Caco-2 (cell line): ENCODE measurements at regions of chr7 and their contacts with region 1.

Region 1: DNA sequence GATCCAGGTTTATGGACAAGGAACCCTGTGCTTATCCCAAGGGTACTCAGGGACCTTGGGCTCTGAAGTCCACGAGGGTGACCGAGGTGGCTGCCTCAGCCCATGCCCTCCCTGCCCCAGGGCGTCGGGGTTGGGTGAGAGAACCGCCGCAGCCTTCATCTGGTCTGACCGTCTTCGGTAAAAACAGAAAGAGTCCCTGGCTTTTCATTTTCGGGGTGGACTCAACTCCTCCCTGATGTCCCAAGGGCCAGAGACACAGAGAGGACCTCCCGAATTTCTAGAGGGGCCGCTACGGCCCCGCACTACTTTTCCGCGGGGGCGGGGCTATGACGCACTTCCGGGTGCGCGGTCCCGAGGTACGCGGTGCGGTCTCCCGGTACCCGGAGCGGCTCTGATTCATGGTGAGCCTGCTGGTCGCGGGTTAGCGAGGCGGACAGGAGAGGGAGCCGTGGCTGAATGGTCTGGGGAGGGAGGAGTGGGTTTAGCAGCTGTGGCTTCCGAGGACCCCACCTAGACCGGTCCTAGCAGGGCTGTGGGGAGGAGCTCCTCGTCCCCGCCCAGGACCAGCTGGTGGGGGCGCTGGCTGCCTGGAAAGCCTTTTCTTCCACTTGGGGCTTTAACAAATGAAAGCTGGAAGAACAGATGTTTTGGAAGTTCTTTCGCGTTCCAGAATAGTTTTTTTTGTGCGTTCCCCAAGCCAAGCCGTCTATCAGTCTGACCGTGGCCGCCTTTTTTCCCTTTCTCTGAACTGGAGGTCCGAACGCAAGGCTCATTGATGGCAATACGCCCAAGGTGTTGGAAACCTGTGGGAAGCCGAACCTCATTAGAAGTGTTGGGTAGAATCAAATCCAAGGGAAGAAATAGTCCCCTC is at the start of gene ZSCAN21:
- DNase-seq: peak; percentile 89 to 91
- H3K4me3 ChIP-seq: peak within 1 kb of the TSS; percentile 78
- H3K4me3 Mint-ChIP-seq: peak within 1 kb of the TSS; percentile 87
- H3K27ac Mint-ChIP-seq: peak within 1 kb of the TSS; percentile 96
- H3K4me1 ChIP-seq: peaks cover 5% of the 10 kb centered on the region
- H3K4me1 Mint-ChIP-seq: peaks cover 8% of the 10 kb centered on the region
- H3K27me3 ChIP-seq: no peaks in the 10 kb centered on the region
- H3K27me3 Mint-ChIP-seq: no peaks in the 10 kb centered on the region
- CTCF ChIP-seq: peak in 1 of 2 experiments; percentile 21
- total RNA-seq, gene ZSCAN21: 15.2 and 16.7 TPM in 2 replicates

Region 2: DNA sequence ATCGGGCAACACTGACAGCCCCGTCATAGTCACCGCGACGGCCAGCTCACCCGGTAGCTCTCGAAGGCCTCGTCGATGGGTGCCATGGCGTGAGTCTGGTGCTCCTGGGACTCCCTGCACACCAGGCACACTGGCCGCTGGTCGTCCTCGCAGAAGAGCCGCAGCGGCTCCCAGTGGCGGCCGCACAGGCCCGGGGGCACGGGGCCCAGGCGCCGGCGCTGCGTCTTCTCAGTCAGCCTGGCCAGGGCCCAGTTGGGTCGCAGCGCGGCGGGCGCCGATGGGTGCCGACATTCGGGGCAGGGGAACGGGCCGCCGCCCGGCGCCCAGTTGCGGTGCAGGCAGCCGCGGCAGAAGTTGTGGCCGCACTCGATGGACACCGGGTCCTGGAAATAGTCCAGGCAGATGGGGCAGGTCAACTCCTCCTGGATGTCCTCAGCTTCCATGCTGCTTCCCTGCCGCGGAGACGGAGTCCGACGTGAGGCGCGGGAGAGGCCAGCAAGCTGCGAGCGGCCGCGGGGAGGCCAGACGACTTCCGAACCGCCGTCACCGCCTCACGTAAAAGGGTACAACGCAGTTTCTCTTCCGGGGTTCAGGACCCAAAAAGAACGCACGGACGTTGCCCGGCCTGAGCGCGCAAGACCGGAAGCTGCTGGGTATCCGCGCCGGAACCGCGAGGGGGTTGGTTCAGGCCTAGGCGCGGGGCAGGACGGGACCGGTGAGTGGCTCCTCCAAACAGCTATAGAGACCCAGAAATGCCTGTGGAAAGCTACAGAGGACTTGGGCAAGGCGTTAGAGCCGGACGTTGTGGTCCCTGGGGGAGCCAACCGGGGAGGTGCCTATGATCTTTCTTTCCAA is 130.5 kb before region 1 on chr7 and contains the start of gene TRIM4:
- CTCF ChIA-PET with region 1: no interaction called
- POLR2A ChIA-PET with region 1: interaction called, 3 read pairs
- intact Hi-C with region 1: loop called (anchors 2 kb)
- DNase-seq: peak; percentile 90 to 91
- H3K4me3 ChIP-seq: peak within 1 kb of the TSS; percentile 89
- H3K4me3 Mint-ChIP-seq: peak within 1 kb of the TSS; percentile 97
- H3K27ac Mint-ChIP-seq: peak within 1 kb of the TSS; percentile 97
- H3K4me1 ChIP-seq: peaks cover 13% of the 10 kb centered on the region; the same call in 1 of the 2 replicates
- H3K4me1 Mint-ChIP-seq: peaks cover 11% of the 10 kb centered on the region
- H3K27me3 ChIP-seq: no peaks in the 10 kb centered on the region
- H3K27me3 Mint-ChIP-seq: no peaks in the 10 kb centered on the region
- CTCF ChIP-seq: peak in 1 of 2 experiments; percentile 42
- total RNA-seq, gene TRIM4: 22.5 and 25.6 TPM in 2 replicates

Region 3: GRCh38 chr7:99997545-99998137 is 52.0 kb before region 1 on chr7:
- CTCF ChIA-PET with region 1: interaction called, 10 read pairs
- POLR2A ChIA-PET with region 1: interaction called, 4 read pairs
- intact Hi-C with region 1: loop called (anchors 1 kb)
- DNase-seq: peak; percentile 77 to 82
- H3K4me3 ChIP-seq: peak overlapping the region; percentile 38
- H3K4me3 Mint-ChIP-seq: peak overlapping the region; percentile 76
- H3K27ac Mint-ChIP-seq: peak overlapping the region; percentile 89
- H3K4me1 ChIP-seq: peaks cover 13% of the 10 kb centered on the region; the same call in 1 of the 2 replicates
- H3K4me1 Mint-ChIP-seq: peaks cover 7% of the 10 kb centered on the region
- H3K27me3 ChIP-seq: no peaks in the 10 kb centered on the region
- H3K27me3 Mint-ChIP-seq: no peaks in the 10 kb centered on the region
- CTCF ChIP-seq: peak; percentile 33 to 37

Region 4: DNA sequence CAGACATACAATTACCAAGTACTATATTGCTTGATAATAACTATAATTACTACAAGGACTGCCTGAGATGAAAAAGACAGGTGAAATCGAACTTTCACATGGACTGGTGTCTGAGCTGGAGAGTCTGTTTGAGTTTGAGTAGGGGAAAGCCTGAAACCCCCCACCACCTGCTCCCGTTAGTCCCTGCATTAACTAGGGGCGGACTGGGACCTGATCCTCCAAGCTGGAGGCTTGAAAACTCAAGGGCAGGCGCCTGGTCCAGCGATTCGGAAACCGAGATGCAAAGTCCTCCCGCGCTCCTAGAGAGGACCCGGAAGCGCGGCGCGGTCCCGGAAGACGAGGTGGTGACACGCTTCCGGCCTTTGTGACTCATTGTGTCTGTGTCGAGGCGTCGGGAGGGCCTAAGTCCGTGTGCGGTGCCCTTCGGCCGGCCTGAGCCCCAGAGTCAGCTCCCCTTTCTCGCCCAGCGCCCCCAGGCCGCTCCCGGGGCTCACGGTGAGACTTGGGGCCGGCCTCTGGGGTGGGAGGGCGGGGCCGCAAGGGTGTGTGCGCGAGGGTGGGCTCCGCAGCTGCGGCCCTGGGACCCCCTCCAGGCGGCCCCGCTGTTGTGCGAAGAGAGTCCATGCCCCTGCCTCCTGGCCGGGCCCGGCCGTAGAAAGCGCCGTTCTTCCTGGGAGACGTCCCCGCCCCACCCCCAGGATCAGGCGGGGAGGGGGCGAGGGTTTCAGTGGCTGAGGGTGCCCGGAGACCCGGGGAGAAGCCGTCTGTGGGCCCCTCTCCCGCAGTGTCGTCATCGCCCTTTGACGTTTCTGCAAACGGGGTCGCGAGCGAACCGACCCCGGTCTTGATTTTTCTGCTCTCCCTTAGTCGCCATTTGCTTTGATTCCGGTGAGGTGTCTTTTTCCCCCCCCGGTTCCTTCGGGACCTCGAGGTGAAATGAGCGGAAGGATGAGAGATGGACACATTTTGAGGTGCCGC is 34.2 kb before region 1 on chr7 and contains the start of gene ZKSCAN1:
- CTCF ChIA-PET with region 1: no interaction called
- POLR2A ChIA-PET with region 1: interaction called, 4 read pairs
- intact Hi-C with region 1: loop called (anchors 1 kb)
- DNase-seq: peak; percentile 86 to 90
- H3K4me3 ChIP-seq: peak within 1 kb of the TSS; percentile 82
- H3K4me3 Mint-ChIP-seq: peak within 1 kb of the TSS; percentile 91
- H3K27ac Mint-ChIP-seq: peak within 1 kb of the TSS; percentile 90
- H3K4me1 ChIP-seq: peaks cover 18% of the 10 kb centered on the region
- H3K4me1 Mint-ChIP-seq: peaks cover 14% of the 10 kb centered on the region
- H3K27me3 ChIP-seq: no peaks in the 10 kb centered on the region
- H3K27me3 Mint-ChIP-seq: no peaks in the 10 kb centered on the region
- CTCF ChIP-seq: no peak
- total RNA-seq, gene ZKSCAN1: 44.8 and 47.5 TPM in 2 replicates

Region 5: DNA sequence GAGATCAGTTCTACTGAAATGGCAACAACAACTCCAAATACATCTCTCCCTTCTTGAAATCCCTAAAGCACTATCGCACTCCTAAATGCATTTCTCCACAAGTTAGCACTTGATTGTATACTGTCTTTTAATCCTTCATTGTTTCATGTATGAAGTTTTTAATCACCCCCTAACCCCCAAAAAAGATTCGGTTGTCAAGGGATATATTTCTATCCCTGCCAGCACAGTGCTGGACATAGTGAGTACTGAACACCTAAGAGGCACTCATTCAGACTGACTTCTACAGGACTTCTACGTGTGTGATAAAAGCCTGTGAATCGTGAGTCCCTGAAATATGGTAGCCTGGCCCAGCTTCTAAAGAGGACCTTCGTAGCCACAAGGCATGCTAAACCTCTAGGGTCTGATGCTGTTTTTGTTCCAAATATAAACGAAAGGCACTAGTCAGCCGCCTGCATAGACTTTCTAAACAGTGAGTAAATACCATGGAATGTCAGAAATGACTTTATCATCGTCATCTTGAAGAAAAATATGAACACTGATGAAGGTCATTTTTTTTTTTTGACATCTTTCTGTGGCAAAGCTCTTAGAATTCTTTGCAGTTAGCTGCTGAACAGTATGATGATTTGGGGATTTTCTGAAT is 14.7 kb before region 1 on chr7:
- CTCF ChIA-PET with region 1: no interaction called
- POLR2A ChIA-PET with region 1: no interaction called
- intact Hi-C with region 1: no loop called
- DNase-seq: no peak
- H3K4me3 ChIP-seq: no peak overlapping the region
- H3K4me3 Mint-ChIP-seq: no peak overlapping the region
- H3K27ac Mint-ChIP-seq: no peak overlapping the region
- H3K4me1 ChIP-seq: peaks cover 10% of the 10 kb centered on the region; the same call in 1 of the 2 replicates
- H3K4me1 Mint-ChIP-seq: peaks cover 6% of the 10 kb centered on the region
- H3K27me3 ChIP-seq: no peaks in the 10 kb centered on the region
- H3K27me3 Mint-ChIP-seq: no peaks in the 10 kb centered on the region
- CTCF ChIP-seq: no peak

Region 6: GRCh38 chr7:100081535-100082102 is 31.9 kb after region 1 on chr7 and contains the start of gene ZNF3:
- CTCF ChIA-PET with region 1: interaction called, 4 read pairs
- POLR2A ChIA-PET with region 1: interaction called, 4 read pairs
- intact Hi-C with region 1: loop called (anchors 1 kb)
- DNase-seq: peak; percentile 99
- H3K4me3 ChIP-seq: peak within 1 kb of the TSS; percentile 74
- H3K4me3 Mint-ChIP-seq: peak within 1 kb of the TSS; percentile 83
- H3K27ac Mint-ChIP-seq: peak within 1 kb of the TSS; percentile 46
- H3K4me1 ChIP-seq: peaks cover 24% of the 10 kb centered on the region
- H3K4me1 Mint-ChIP-seq: peaks cover 14% of the 10 kb centered on the region
- H3K27me3 ChIP-seq: no peaks in the 10 kb centered on the region
- H3K27me3 Mint-ChIP-seq: no peaks in the 10 kb centered on the region
- CTCF ChIP-seq: peak; percentile 89 to 91
- total RNA-seq, gene ZNF3: 37.8 and 41.1 TPM in 2 replicates